ENCODE measurements at regions of chr11 and their contacts with region 1.

Region 1: GRCh38 chr11:111283945-111284481 is 14.3 kb upstream of the POU2AF3 start:
- H3K4me3 Mint-ChIP-seq: no peak overlapping the region
- H3K27ac Mint-ChIP-seq: no peak overlapping the region
- H3K4me1 Mint-ChIP-seq: no peaks in the 10 kb centered on the region
- H3K27me3 Mint-ChIP-seq: peaks cover 4% of the 10 kb centered on the region

Region 2: DNA sequence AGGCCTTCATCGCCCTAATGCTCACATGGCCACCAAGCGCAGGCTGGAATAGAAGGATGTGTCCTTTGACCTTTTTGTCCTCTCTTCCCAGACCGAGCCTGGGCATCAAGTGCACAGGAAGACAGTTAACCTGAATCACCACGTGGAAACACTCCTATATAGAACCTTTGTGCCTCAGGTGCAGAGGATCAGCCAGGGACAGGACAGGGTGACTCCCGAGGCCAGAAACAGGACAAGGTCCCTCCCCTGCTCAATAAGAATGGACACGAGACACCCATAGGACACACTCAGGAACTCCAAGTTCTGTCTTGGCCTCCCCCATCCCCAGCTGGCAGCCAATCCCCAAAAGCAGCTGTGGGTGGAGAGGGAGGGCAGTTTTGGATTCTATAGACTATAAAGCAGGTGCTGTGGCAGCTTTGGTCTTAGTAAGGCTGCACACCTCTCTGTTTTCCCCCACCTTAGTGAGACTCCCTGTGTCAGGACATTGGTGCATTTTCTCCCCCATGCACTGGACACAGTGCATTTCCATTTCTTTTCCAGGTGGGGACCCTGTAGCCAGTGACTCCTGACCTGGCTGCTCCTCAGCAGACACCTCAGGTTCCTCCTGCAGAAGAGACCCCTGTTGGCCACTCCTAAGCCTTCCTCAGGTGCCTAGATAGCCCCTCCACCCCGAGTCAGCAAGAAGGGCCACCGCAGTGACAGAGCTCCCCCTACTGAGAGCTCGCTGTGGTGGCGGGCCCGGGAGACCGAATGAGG is 138.7 kb after region 1 on chr11:
- intact Hi-C with region 1: loop called (anchors 1 kb)
- H3K4me3 Mint-ChIP-seq: no peak overlapping the region
- H3K27ac Mint-ChIP-seq: no peak overlapping the region
- H3K4me1 Mint-ChIP-seq: peaks cover 4% of the 10 kb centered on the region
- H3K27me3 Mint-ChIP-seq: no peaks in the 10 kb centered on the region

Region 3: DNA sequence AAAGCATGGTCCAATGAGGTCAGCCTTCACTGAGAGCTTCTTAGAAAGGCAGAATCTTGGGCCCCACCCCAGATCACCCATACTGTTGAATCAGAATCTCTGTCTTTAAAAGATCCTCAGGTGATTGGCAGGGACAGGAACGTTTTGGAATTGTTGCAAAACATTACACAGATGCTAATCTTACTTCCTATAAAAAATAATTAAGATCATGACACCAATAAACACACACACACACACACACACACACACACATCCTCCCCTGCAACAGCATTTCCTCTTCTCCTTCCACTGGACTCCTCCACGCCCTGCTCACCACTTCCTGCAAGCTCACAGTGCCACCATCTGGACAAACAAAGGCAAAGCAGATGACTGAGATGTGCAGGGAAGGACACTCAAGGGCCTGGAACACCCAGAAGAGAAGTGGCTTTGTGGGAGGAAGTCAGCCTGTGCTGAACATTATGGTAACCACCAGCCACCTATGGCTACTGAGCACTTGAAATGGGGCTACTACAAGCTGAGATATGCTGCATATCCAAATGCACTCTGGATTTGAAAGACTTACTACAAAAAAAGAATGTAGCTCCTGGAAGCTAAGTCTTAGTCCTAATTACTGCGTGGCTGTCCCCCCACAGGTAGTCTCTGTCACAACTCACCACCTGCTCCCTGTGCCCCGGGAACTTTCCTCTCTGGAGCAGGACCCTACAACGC is 162.5 kb after region 1 on chr11:
- intact Hi-C with region 1: loop called (anchors 1 kb)
- H3K4me3 Mint-ChIP-seq: no peak overlapping the region
- H3K27ac Mint-ChIP-seq: no peak overlapping the region
- H3K4me1 Mint-ChIP-seq: peaks cover 16% of the 10 kb centered on the region
- H3K27me3 Mint-ChIP-seq: peaks cover 3% of the 10 kb centered on the region

Region 4: GRCh38 chr11:111652184-111652583 is 368.2 kb after region 1 on chr11:
- intact Hi-C with region 1: no loop called
- H3K4me3 Mint-ChIP-seq: no peak overlapping the region
- H3K27ac Mint-ChIP-seq: no peak overlapping the region
- H3K4me1 Mint-ChIP-seq: no peaks in the 10 kb centered on the region
- H3K27me3 Mint-ChIP-seq: no peaks in the 10 kb centered on the region

Measured in dendritic cell treated with granulocyte-macrophage colony-stimulating factor and Interleukin-4, amounts not matched to agents 40 ng/mL and 50 ng/mL, for 4 days (primary cell).